ENCODE measurements at regions of chr19 and their contacts with region 1.

Region 1: DNA sequence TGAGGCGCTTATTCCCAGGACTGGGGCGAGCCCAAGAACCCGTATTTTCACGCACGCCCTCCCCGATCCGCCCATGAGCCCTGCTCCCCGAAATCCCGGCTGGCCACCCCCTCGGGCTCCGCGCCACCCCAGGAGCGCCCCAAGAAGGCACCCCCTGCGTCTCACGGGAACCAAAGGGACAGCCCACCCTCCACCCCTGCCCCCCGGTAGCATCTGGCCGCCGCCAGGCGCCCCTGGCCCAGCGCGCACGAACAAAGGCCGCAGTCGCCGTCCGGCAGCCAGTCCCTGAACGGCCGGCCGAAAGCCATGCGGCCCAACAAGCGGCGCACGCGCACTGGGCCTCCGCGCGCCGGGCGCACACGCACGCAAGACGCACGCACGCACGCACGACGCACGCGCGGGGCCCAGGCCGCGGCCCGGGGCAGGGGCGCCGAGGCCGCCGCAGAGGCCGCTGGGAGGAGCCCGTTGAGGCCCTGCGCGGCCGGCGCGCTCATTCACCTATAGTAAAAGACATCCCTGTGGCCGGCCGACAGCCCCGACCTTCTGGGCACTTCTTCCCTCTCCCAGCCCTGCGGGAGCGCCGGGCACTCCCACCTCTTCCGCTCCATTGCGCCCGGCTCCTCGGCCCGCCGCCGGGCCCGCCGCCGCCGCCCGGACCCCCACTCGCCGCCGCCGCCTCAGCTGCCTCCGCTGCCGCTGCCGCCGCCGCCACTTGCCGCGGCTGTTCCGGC is 476 bp downstream of the MBD3 start:
- DNase-seq: peak; percentile 80 to 88 (median 88)
- H3K4me3 ChIP-seq: peak overlapping the region; percentile 44 to 95 (median 85)
- H3K27ac ChIP-seq: peak overlapping the region; percentile 85 to 92
- H3K4me1 ChIP-seq: peaks cover 3 to 27% (median 21%) of the 10 kb centered on the region in 4 experiments
- H3K27me3 ChIP-seq: no peaks in the 10 kb centered on the region

Region 2: GRCh38 chr19:1540365-1540925 is 51.7 kb before region 1 on chr19:
- CTCF ChIA-PET with region 1: interaction called, 11 read pairs
- POLR2A ChIA-PET with region 1: interaction called, 3 read pairs
- DNase-seq: no peak
- H3K4me3 ChIP-seq: no peak overlapping the region
- H3K27ac ChIP-seq: no peak overlapping the region
- H3K4me1 ChIP-seq: no peaks in the 10 kb centered on the region
- H3K27me3 ChIP-seq: peaks cover 4 to 53% (median 8%) of the 10 kb centered on the region in 5 experiments

Region 3: DNA sequence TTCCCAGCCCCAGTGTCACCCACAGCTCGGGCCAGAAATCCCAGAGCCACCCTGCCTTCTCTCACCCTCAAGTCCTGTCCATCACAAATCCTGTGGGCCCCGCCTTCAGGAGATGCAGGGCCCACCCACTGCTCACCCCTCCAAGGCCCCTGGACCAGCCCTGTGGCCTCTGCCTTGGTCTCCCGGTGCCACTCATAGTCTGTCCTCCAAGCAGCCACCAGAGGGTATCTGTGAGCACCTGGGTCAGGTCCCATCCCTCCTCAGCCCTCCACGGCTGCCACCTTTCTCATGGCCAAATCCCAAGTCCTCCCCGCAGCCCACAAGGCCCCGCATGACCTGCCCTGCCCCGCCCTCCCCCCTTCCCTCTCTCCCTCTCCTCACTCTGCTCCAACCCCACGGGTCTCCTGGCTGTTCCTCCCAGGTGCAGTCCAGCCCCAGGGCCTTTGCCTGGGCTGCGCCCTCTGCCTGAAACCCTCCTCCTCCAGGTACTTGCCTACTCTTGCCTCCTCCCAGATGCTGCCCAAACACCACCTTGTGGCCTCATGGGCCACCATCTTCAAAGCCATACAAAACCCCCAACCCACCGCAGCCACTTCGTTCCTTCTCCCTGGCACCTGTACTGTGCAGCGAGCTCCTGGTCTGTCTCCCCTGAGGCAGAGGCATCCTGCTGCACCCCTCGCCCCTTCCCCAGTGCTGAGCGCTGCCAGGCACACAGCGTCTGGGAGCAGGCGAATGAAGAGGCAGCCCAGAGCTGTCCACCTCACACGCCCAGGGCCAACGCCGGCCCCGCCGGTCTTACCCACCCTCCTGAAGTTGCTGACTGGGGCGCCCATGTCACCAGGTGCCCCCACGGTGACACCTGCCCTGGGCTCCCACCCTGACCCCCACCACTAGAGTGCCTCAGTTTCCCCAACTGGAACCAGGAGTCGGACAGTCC is 26.2 kb after region 1 on chr19:
- CTCF ChIA-PET with region 1: no interaction called
- POLR2A ChIA-PET with region 1: no interaction called
- DNase-seq: peak; percentile 11 to 35 (median 20)
- H3K4me3 ChIP-seq: no peak overlapping the region
- H3K27ac ChIP-seq: no peak overlapping the region
- H3K4me1 ChIP-seq: no peaks in the 10 kb centered on the region
- H3K27me3 ChIP-seq: no peaks in the 10 kb centered on the region

Region 4: DNA sequence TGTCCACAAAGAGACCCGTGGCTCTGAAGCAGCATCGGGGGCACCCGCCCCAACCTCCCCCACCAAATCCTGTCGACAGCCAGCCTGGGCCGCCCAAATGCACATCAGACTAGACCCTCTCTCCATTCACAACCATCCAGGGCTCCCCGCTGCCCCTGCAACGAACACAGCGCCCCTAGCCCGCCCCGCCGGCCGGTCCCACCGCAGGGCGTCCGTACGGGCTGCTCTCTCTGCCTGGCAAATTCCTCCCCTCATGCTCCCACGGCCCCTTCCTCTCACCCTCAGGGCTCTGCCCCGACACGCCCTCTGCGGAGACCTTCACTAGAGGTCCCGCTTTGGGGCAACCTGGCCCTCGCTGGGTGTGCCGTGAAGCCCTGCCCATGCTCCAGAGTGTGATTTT is 53.1 kb after region 1 on chr19:
- CTCF ChIA-PET with region 1: no interaction called
- POLR2A ChIA-PET with region 1: no interaction called
- DNase-seq: no peak
- H3K4me3 ChIP-seq: no peak overlapping the region
- H3K27ac ChIP-seq: no peak overlapping the region
- H3K4me1 ChIP-seq: peaks cover 0 to 7% (median 4%) of the 10 kb centered on the region in 4 experiments
- H3K27me3 ChIP-seq: no peaks in the 10 kb centered on the region

Measured in common myeloid progenitor, CD34-positive (primary cell).